Activated CD4-positive, alpha-beta memory T cell treated with anti-CD3 and anti-CD28 coated beads, Interleukin-2, amount 10 ng/mL, durations not matched to agents 7 days and 5 days (primary cell): ENCODE measurements at regions of chr2 and their contacts with region 1.

Region 1: GRCh38 chr2:105235388-105236054 is 6.0 kb upstream of the GPR45 start:
- DNase-seq: peak; percentile 63
- H3K4me3 Mint-ChIP-seq: no peak overlapping the region
- H3K27ac Mint-ChIP-seq: no peak overlapping the region
- H3K4me1 Mint-ChIP-seq: peaks cover 17% of the 10 kb centered on the region
- H3K27me3 Mint-ChIP-seq: peaks cover 21% of the 10 kb centered on the region

Region 2: GRCh38 chr2:105114551-105114950 is 121.0 kb before region 1 on chr2:
- CTCF ChIA-PET with region 1: interaction called, 94 read pairs
- POLR2A ChIA-PET with region 1: no interaction called
- DNase-seq: no peak
- H3K4me3 Mint-ChIP-seq: no peak overlapping the region
- H3K27ac Mint-ChIP-seq: no peak overlapping the region
- H3K4me1 Mint-ChIP-seq: no peaks in the 10 kb centered on the region
- H3K27me3 Mint-ChIP-seq: no peaks in the 10 kb centered on the region

Region 3: DNA sequence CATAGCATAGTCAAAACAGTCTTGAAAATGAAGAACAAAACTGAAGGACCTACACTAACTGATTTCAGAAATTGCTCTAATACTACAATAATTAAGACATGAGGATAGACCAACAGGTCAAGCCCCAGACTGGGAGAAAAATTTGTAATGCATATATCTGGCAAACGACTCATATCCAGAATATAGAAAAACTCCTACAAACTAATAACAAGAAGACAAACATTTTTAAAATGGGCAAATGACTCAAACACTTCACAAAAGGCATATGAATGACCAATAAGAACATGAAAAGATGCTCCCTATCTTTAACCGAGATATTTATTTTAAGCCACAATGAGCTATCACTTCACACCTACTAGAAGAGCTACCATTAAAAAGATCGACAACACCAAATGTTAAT is 79.8 kb after region 1 on chr2:
- CTCF ChIA-PET with region 1: no interaction called
- POLR2A ChIA-PET with region 1: no interaction called
- DNase-seq: no peak
- H3K4me3 Mint-ChIP-seq: no peak overlapping the region
- H3K27ac Mint-ChIP-seq: no peak overlapping the region
- H3K4me1 Mint-ChIP-seq: peaks cover 11% of the 10 kb centered on the region
- H3K27me3 Mint-ChIP-seq: no peaks in the 10 kb centered on the region